ENCODE measurements at regions of chr15 and their contacts with region 1.

Region 1: GRCh38 chr15:76190834-76191538 is 120.3 kb downstream of the ETFA start:
- DNase-seq: peak; percentile 61 to 83
- ATAC-seq: peak; percentile 66 to 85
- H3K4me3 ChIP-seq: peak overlapping the region in 1 of 4 donors; percentile 2
- H3K27ac ChIP-seq: peak overlapping the region; percentile 1 to 68 (median 56)
- H3K4me1 ChIP-seq: peaks cover 17 to 37% of the 10 kb centered on the region in 2 donors
- H3K27me3 ChIP-seq: no peaks in the 10 kb centered on the region
- CTCF ChIP-seq: peak; percentile 85 to 94 (median 90)
- POLR2A ChIP-seq: no peak

Region 2: GRCh38 chr15:76235186-76235826 is 44.3 kb after region 1 on chr15:
- in situ Hi-C with region 1: no loop called
- intact Hi-C with region 1: loop called (anchors 2 kb)
- DNase-seq: no peak
- ATAC-seq: peak; percentile 39 to 93
- H3K4me3 ChIP-seq: no peak overlapping the region
- H3K27ac ChIP-seq: no peak overlapping the region
- H3K4me1 ChIP-seq: peaks cover 3 to 17% of the 10 kb centered on the region in 2 donors
- H3K27me3 ChIP-seq: no peaks in the 10 kb centered on the region
- CTCF ChIP-seq: peak in 4 of 5 experiments; percentile 34 to 63 (median 42)
- POLR2A ChIP-seq: no peak

Region 3: DNA sequence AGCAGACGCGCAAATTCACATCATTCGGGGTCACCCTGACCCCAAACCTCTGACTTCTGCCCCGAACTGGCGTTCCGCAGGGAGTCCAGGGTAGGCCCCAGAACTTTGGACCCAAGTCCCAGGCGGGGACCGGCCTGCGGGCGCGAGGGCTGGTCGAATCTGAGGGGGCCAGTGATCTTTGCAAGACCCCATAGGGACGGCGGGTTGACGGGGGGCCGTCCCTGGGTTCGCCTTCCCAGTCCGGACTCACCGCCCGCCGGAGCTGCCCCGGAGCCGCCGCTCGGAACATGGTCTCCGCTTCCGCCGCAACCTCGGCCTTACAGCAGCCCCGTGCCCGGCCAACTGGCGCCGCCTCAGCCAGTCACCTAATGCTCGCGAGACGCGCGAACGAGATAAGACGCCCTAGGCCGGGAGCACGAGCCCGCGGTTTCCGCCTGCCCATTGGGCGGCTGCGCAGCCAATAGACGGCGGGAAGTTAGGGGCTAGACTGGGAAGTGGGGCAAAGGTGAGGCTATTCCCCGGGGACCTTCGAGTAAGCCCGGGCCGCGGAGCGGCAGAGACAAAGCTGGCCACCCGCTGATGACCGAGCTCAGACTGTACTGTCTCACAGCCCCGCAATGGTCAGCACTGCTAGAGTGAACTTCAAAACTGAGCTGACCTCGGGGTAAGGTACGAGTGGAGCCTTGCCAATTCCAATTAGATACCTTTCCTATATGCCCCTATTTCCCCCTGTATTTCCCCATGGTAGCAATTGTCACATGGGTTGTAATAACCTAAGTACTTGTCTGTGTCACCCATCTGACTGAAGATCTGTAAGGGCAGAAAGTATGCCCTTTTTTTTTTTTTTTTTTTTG is 120.3 kb after region 1 on chr15 and contains the start of gene ETFA:
- in situ Hi-C with region 1: loop called in 1 of 4 experiments (anchors 10 kb)
- intact Hi-C with region 1: loop called (anchors 2 kb)
- DNase-seq: peak; percentile 96 to 98
- ATAC-seq: peak; percentile 93 to 95
- H3K4me3 ChIP-seq: peak within 1 kb of the TSS; percentile 74 to 97 (median 78)
- H3K27ac ChIP-seq: peak within 1 kb of the TSS; percentile 87 to 94 (median 90)
- H3K4me1 ChIP-seq: peaks cover 27 to 31% of the 10 kb centered on the region in 2 donors
- H3K27me3 ChIP-seq: no peaks in the 10 kb centered on the region
- CTCF ChIP-seq: no peak
- POLR2A ChIP-seq: peak; percentile 98 to 99
- total RNA-seq, gene ETFA: 179 to 261 (median 227) TPM

Region 4: DNA sequence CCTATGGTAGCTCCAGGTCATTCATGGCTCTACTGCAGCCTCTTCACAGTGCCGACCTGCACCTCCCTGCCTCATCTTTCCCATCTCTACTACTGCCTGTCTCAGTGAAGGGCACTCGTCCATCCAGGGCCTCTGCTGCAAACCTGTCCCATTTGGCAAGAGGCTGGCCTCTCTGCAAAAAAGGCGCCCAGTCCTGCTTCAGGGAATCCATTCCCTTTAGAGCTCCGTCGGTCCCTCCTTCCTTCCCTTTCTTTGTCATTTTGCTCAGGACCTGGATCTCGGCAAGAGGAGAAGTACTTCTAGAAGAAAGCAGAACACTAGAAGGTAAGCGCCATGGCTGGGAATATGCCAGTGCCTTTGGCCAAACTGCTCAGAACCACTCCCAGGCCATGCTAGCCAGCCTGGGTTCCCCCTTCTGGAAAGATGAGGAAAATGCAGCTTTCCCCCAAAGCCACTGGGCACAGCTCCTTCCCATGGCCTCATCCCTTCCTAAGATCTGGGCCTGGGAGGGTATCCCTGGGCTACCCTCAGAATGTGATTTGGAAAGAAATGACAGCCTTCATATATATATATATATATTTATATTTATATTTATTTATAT is 139.2 kb after region 1 on chr15:
- in situ Hi-C with region 1: loop called in 3 of 4 experiments (anchors 10 to 25 kb)
- intact Hi-C with region 1: loop called (anchors 2 kb)
- DNase-seq: peak in 1 of 2 donors; percentile 64
- ATAC-seq: peak; percentile 63 to 67
- H3K4me3 ChIP-seq: no peak overlapping the region
- H3K27ac ChIP-seq: no peak overlapping the region
- H3K4me1 ChIP-seq: peaks cover 4 to 14% of the 10 kb centered on the region in 2 donors
- H3K27me3 ChIP-seq: peaks cover 19 to 25% (median 24%) of the 10 kb centered on the region in 3 donors
- CTCF ChIP-seq: peak; percentile 42 to 63 (median 47)
- POLR2A ChIP-seq: no peak

Region 5: GRCh38 chr15:76336254-76337058 is 145.5 kb after region 1 on chr15 and contains the start of gene ISL2:
- in situ Hi-C with region 1: loop called in 3 of 4 experiments (anchors 10 to 25 kb)
- intact Hi-C with region 1: loop called (anchors 2 kb)
- DNase-seq: no peak
- ATAC-seq: no peak
- H3K4me3 ChIP-seq: peak within 1 kb of the TSS in 3 of 4 donors; percentile 22 to 45 (median 23)
- H3K27ac ChIP-seq: no peak within 1 kb of the TSS
- H3K4me1 ChIP-seq: peaks cover 31 to 35% of the 10 kb centered on the region in 2 donors
- H3K27me3 ChIP-seq: peaks cover 80 to 87% (median 81%) of the 10 kb centered on the region in 3 donors
- CTCF ChIP-seq: no peak
- POLR2A ChIP-seq: no peak
- total RNA-seq, gene ISL2: not detected

Region 6: GRCh38 chr15:76576523-76577279 is 385.7 kb after region 1 on chr15:
- in situ Hi-C with region 1: no loop called
- intact Hi-C with region 1: no loop called
- DNase-seq: peak in 1 of 2 donors; percentile 28
- ATAC-seq: no peak
- H3K4me3 ChIP-seq: no peak overlapping the region
- H3K27ac ChIP-seq: no peak overlapping the region
- H3K4me1 ChIP-seq: peaks cover 11 to 12% of the 10 kb centered on the region in 2 donors
- H3K27me3 ChIP-seq: no peaks in the 10 kb centered on the region
- CTCF ChIP-seq: no peak
- POLR2A ChIP-seq: no peak